AG04450 (cell line): ENCODE measurements at regions of chr19 and their contacts with region 1.

Region 1: DNA sequence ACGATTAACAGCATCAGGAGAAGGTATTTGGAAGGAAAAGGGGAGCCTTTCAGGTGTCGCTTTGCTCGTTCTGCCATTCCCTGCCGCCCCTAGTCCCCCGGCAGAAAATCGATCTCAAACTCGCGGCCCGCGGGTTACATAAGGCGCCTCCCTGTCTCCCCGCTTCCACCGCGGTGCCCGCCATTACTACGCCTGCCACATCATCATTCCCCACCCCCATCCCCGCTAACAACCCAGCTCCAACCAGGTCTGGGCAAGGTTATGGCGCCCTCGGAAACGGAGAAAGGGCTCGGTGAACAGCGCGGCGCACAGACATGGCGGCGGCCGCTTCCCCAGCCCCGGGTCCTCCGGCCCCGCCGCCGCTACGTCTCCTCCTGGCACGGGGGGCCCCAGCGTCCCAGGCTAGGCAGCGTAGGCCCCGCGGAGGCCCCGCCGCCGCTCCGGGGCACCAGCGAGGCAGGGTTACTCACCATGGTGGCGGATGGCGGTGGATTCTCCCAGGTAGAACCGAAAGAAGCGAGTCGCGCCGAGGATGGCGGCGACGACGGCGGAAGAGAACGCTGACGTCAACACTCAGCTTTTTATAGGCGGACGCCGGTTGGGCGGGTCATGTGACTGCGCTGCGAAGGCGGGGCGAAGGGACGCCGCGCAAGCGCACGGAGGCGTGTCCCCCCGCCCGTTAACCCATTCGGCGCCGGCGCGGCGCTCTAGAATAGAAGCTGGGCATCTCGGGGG is at the start of gene EEF2:
- DNase-seq: peak; percentile 86
- H3K4me3 ChIP-seq: peak within 1 kb of the TSS; percentile 97
- H3K27ac ChIP-seq: peak within 1 kb of the TSS; percentile 82
- H3K27me3 ChIP-seq: no peaks in the 10 kb centered on the region
- CTCF ChIP-seq: no peak
- polyA plus RNA-seq, gene EEF2: 1,648 and 1,697 TPM in 2 replicates

Region 2: GRCh38 chr19:3612901-3613741 is 372.0 kb before region 1 on chr19:
- CTCF ChIA-PET with region 1: interaction called, 16 read pairs
- POLR2A ChIA-PET with region 1: no interaction called
- DNase-seq: no peak
- H3K4me3 ChIP-seq: no peak overlapping the region
- H3K27ac ChIP-seq: no peak overlapping the region
- H3K27me3 ChIP-seq: no peaks in the 10 kb centered on the region
- CTCF ChIP-seq: no peak

Region 3: DNA sequence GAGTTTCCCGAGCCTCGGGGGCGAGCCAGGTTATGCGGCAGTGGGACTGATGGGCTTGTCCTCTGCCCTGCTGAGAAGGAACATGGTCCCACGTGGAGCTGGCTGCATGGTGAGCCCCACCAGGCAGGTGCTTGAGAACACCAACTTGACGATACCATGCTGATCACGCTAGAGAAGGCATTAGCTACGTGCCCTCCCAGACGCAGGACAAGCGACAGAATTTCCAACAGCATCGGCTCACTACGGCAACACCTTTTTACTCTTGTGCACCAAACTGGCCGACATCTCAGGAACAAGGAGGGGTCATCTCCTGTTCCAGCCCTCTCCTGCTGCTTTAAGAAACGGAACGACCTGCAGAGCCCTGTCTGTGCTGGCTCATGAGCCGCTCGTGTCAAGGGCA is 124.6 kb before region 1 on chr19:
- CTCF ChIA-PET with region 1: no interaction called
- POLR2A ChIA-PET with region 1: no interaction called
- DNase-seq: no peak
- H3K4me3 ChIP-seq: no peak overlapping the region
- H3K27ac ChIP-seq: no peak overlapping the region
- H3K27me3 ChIP-seq: peaks cover 23% of the 10 kb centered on the region
- CTCF ChIP-seq: no peak

Region 4: DNA sequence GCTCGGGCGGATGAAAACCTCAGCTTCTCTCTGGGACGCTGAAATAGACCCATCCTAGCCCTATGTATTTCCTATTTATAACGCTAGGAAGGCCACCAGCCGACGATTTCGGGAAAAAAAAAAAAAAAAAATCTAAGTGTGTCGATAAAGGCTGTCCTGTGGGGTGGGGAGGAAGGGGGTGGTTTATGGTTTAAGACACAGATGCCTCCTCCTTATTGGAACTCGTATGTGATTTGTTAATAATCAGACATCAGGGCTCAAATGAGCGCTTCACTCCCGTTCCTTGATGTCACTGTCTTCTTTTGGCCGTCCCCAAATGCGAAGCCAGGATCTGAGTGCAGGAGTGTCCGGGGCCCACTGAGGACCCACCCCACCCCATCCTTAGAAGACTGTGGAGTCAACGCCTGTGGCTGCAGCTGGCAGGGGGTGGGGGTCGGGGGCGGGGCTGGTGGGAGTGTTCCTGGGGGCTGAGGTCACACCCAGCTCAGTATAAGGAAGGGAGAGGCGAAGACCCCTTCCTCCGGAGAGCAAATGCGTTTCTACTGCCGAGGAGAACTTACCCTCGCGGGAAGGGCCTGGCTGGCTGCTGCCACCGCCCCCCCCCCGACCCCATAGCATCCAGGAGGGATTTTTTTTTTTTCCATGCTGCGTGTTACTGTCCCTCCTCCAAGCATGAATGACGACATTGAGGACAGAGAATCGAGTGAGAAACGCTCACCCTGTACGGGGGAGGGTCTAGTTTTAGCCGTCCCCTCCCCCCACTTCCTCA is 103.6 kb before region 1 on chr19:
- CTCF ChIA-PET with region 1: no interaction called
- POLR2A ChIA-PET with region 1: no interaction called
- DNase-seq: no peak
- H3K4me3 ChIP-seq: no peak overlapping the region
- H3K27ac ChIP-seq: no peak overlapping the region
- H3K27me3 ChIP-seq: peaks cover 27% of the 10 kb centered on the region
- CTCF ChIP-seq: no peak

Region 5: GRCh38 chr19:3970808-3971598 is 14.1 kb before region 1 on chr19 and contains the start of gene DAPK3:
- CTCF ChIA-PET with region 1: interaction called, 18 read pairs
- POLR2A ChIA-PET with region 1: interaction called, 221 read pairs
- DNase-seq: peak; percentile 95
- H3K4me3 ChIP-seq: peak within 1 kb of the TSS; percentile 98
- H3K27ac ChIP-seq: peak within 1 kb of the TSS; percentile 98
- H3K27me3 ChIP-seq: no peaks in the 10 kb centered on the region
- CTCF ChIP-seq: no peak
- polyA plus RNA-seq, gene DAPK3: 105 and 149 TPM in 2 replicates

Region 6: DNA sequence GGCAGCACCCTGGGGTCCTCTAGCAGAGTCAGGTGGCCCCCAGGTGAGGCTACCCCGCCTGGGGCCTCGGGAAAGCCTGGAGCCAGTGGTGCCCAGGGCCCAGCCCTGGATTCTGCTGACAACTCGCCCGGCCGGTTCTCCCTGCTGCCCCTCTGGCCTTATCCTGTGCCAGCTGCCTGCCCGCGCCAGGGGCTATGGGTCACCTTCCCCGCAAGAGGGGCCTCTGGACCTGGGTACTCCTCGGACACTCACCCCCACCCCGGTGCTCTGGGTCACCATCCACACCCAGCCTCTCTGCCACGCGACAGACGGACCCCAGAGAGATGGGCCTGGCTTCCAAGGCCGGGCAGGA is 57.6 kb after region 1 on chr19:
- CTCF ChIA-PET with region 1: interaction called, 10 read pairs
- POLR2A ChIA-PET with region 1: no interaction called
- DNase-seq: no peak
- H3K4me3 ChIP-seq: no peak overlapping the region
- H3K27ac ChIP-seq: no peak overlapping the region
- H3K27me3 ChIP-seq: no peaks in the 10 kb centered on the region
- CTCF ChIP-seq: no peak

Region 7: GRCh38 chr19:4075373-4075772 is 90.3 kb after region 1 on chr19:
- CTCF ChIA-PET with region 1: interaction called, 13 read pairs
- POLR2A ChIA-PET with region 1: no interaction called
- DNase-seq: no peak
- H3K4me3 ChIP-seq: no peak overlapping the region
- H3K27ac ChIP-seq: no peak overlapping the region
- H3K27me3 ChIP-seq: no peaks in the 10 kb centered on the region
- CTCF ChIP-seq: no peak

Region 8: GRCh38 chr19:4187313-4188122 is 202.4 kb after region 1 on chr19:
- CTCF ChIA-PET with region 1: interaction called, 16 read pairs
- POLR2A ChIA-PET with region 1: interaction called, 4 read pairs
- DNase-seq: no peak
- H3K4me3 ChIP-seq: no peak overlapping the region
- H3K27ac ChIP-seq: no peak overlapping the region
- H3K27me3 ChIP-seq: no peaks in the 10 kb centered on the region
- CTCF ChIP-seq: no peak